ENCODE measurements at regions of chr17 and their contacts with region 1.

Region 1: GRCh38 chr17:1769822-1770477 is 8.1 kb downstream of the SERPINF1 start:
- DNase-seq: peak; percentile 62
- ATAC-seq: peak; percentile 54
- H3K4me3 ChIP-seq: no peak overlapping the region
- H3K4me3 Mint-ChIP-seq: peak overlapping the region; percentile 68
- H3K27ac ChIP-seq: peak overlapping the region; percentile 34 to 43
- H3K27ac Mint-ChIP-seq: peak overlapping the region; percentile 90
- H3K4me1 ChIP-seq: peaks cover 26 to 55% of the 10 kb centered on the region in 2 donors
- H3K4me1 Mint-ChIP-seq: peaks cover 36% of the 10 kb centered on the region
- H3K27me3 ChIP-seq: no peaks in the 10 kb centered on the region
- H3K27me3 Mint-ChIP-seq: no peaks in the 10 kb centered on the region
- CTCF ChIP-seq: no peak

Region 2: DNA sequence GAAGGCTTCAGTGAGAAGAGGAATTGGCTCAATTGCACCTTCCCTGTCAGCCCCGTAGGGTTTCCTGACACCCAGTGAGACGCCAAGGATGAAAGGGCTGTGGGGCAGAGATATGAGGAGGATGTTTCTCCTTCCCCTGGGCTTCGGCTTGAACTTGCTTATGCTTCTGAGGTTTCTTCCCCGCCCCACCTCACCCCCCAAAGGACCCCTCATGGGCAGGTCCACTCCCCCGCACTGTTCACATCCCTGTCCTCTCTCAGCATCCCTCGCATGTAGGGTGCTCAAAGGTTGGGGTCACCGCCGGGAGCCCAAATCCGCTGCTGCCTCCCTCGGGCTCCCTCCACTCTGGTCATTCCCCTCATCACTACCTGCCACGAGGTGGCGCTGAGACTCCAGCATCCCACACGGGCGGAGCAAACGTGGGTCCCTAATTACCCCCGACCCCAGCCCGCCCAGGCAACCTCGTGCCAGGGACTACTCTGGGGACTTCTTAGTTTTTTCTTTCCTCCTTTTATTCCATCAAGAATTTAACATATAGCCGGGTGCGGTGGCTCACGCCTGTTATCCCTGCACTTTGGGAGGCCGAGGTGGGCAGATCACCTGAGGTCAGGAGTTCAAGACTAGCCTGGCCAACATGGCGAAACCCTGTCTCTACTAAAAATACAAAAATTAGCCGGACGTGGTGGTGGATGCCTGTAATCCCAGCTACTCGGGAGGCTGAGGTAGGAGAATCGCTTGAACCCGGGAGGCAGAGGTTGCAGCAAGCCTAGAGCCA is 493.8 kb before region 1 on chr17:
- CTCF ChIA-PET with region 1: no interaction called
- POLR2A ChIA-PET with region 1: interaction called, 10 read pairs
- intact Hi-C with region 1: no loop called
- DNase-seq: peak; percentile 79
- ATAC-seq: peak; percentile 85
- H3K4me3 ChIP-seq: no peak overlapping the region
- H3K4me3 Mint-ChIP-seq: peak overlapping the region; percentile 47
- H3K27ac ChIP-seq: no peak overlapping the region
- H3K27ac Mint-ChIP-seq: no peak overlapping the region
- H3K4me1 ChIP-seq: peaks cover 7 to 16% of the 10 kb centered on the region in 2 donors
- H3K4me1 Mint-ChIP-seq: peaks cover 18% of the 10 kb centered on the region
- H3K27me3 ChIP-seq: peaks cover 0 to 16% (median 2%) of the 10 kb centered on the region in 4 experiments
- H3K27me3 Mint-ChIP-seq: peaks cover 13% of the 10 kb centered on the region
- CTCF ChIP-seq: peak; percentile 81

Region 3: GRCh38 chr17:1730328-1731193 is 39.4 kb before region 1 on chr17:
- CTCF ChIA-PET with region 1: interaction called, 4 read pairs
- POLR2A ChIA-PET with region 1: interaction called, 25 read pairs
- intact Hi-C with region 1: loop called (anchors 1 kb)
- DNase-seq: no peak
- ATAC-seq: no peak
- H3K4me3 ChIP-seq: no peak overlapping the region
- H3K4me3 Mint-ChIP-seq: no peak overlapping the region
- H3K27ac ChIP-seq: no peak overlapping the region
- H3K27ac Mint-ChIP-seq: peak overlapping the region; percentile 50
- H3K4me1 ChIP-seq: peaks cover 17 to 43% of the 10 kb centered on the region in 2 donors
- H3K4me1 Mint-ChIP-seq: peaks cover 53% of the 10 kb centered on the region
- H3K27me3 ChIP-seq: no peaks in the 10 kb centered on the region
- H3K27me3 Mint-ChIP-seq: no peaks in the 10 kb centered on the region
- CTCF ChIP-seq: no peak

Region 4: DNA sequence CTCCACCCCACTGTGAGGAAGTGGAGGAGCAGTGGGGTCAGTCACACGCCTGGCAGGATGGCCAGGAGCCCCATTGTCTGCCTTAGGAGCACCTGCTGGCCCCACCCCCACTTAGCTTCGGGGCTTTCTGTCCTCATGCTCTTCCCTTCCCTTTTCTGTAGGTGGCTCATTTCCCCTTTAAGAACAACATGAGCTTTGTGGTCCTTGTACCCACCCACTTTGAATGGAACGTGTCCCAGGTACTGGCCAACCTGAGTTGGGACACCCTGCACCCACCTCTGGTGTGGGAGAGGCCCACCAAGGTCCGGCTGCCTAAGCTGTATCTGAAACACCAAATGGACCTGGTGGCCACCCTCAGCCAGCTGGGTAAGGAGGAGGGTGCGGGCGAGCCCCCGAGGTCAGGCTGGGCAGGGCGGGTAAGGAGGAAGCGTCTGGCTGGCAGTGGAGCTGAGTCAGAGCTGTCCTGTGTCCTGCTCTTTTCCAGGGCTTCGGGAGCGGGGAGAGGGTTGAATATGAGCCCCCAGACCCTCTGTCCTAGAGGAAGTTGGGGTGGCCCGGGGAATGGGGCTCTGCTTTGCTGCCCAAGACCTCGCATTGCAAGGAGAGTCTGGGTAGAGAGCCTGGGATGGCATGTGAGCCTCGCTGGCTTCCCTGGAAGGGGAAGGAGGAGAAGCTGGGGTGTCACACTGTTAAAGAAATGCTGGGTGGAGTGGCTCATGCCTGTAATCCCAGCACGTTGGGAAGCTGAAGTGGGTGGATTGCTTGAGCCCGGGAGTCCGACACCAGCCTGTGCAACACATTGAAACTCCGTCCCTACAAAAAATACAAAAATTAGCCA is 17.3 kb before region 1 on chr17:
- CTCF ChIA-PET with region 1: interaction called, 16 read pairs
- POLR2A ChIA-PET with region 1: interaction called, 9 read pairs
- intact Hi-C with region 1: no loop called
- DNase-seq: peak; percentile 75
- ATAC-seq: peak; percentile 82
- H3K4me3 ChIP-seq: peak overlapping the region in 2 of 5 experiments; percentile 17 to 21
- H3K4me3 Mint-ChIP-seq: peak overlapping the region; percentile 67
- H3K27ac ChIP-seq: peak overlapping the region in 1 of 2 donors; percentile 6
- H3K27ac Mint-ChIP-seq: peak overlapping the region; percentile 82
- H3K4me1 ChIP-seq: peaks cover 10 to 15% of the 10 kb centered on the region in 2 donors
- H3K4me1 Mint-ChIP-seq: peaks cover 15% of the 10 kb centered on the region
- H3K27me3 ChIP-seq: no peaks in the 10 kb centered on the region
- H3K27me3 Mint-ChIP-seq: no peaks in the 10 kb centered on the region
- CTCF ChIP-seq: no peak

Measured in B cell (primary cell).